HCT116 (cell line): ENCODE measurements at regions of chr19 and their contacts with region 1.

Region 1: GRCh38 chr19:5577785-5578493 is 10.2 kb upstream of the TINCR start:
- DNase-seq: no peak
- ATAC-seq: peak; percentile 91
- H3K4me3 ChIP-seq: no peak overlapping the region
- H3K27ac ChIP-seq: no peak overlapping the region
- H3K4me1 ChIP-seq: peaks cover under 1 to 9% of the 10 kb centered on the region in 2 experiments; a peak in 3 of 4 replicates
- H3K27me3 ChIP-seq: no peaks in the 10 kb centered on the region
- CTCF ChIP-seq: peak; percentile 74 to 97 (median 92)
- POLR2A ChIP-seq: no peak
- RAD21 ChIP-seq: peak; percentile 90

Region 2: GRCh38 chr19:5048091-5048726 is 529.7 kb before region 1 on chr19:
- CTCF ChIA-PET with region 1: no interaction called
- POLR2A ChIA-PET with region 1: no interaction called
- RAD21 ChIA-PET with region 1: no interaction called
- intact Hi-C with region 1: loop called (anchors 5 kb)
- DNase-seq: no peak
- ATAC-seq: peak; percentile 94
- H3K4me3 ChIP-seq: no peak overlapping the region
- H3K27ac ChIP-seq: no peak overlapping the region; the same call in 1 of the 2 replicates
- H3K4me1 ChIP-seq: peaks cover 19 to 35% of the 10 kb centered on the region in 2 experiments
- H3K27me3 ChIP-seq: no peaks in the 10 kb centered on the region
- CTCF ChIP-seq: peak; percentile 63 to 95 (median 91); a peak in 5 of 6 replicates
- POLR2A ChIP-seq: no peak
- RAD21 ChIP-seq: peak; percentile 93

Region 3: GRCh38 chr19:5369962-5370367 is 208.0 kb before region 1 on chr19:
- CTCF ChIA-PET with region 1: no interaction called
- POLR2A ChIA-PET with region 1: no interaction called
- RAD21 ChIA-PET with region 1: no interaction called
- intact Hi-C with region 1: loop called (anchors 1 kb)
- DNase-seq: no peak
- ATAC-seq: peak; percentile 99
- H3K4me3 ChIP-seq: no peak overlapping the region
- H3K27ac ChIP-seq: no peak overlapping the region
- H3K4me1 ChIP-seq: no peaks in the 10 kb centered on the region
- H3K27me3 ChIP-seq: peaks cover 4% of the 10 kb centered on the region; the same call in 1 of the 2 replicates
- CTCF ChIP-seq: peak; percentile 52 to 92 (median 82); a peak in 5 of 6 replicates
- POLR2A ChIP-seq: no peak
- RAD21 ChIP-seq: peak; percentile 50

Region 4: GRCh38 chr19:5417495-5418436 is 160.2 kb before region 1 on chr19:
- CTCF ChIA-PET with region 1: no interaction called
- POLR2A ChIA-PET with region 1: no interaction called
- RAD21 ChIA-PET with region 1: no interaction called
- intact Hi-C with region 1: no loop called
- DNase-seq: no peak
- ATAC-seq: no peak
- H3K4me3 ChIP-seq: no peak overlapping the region
- H3K27ac ChIP-seq: no peak overlapping the region
- H3K4me1 ChIP-seq: no peaks in the 10 kb centered on the region
- H3K27me3 ChIP-seq: peaks cover 21% of the 10 kb centered on the region
- CTCF ChIP-seq: no peak
- POLR2A ChIP-seq: no peak
- RAD21 ChIP-seq: no peak

Region 5: GRCh38 chr19:5547881-5548280 is 30.1 kb before region 1 on chr19:
- CTCF ChIA-PET with region 1: interaction called, 6 read pairs
- POLR2A ChIA-PET with region 1: no interaction called
- RAD21 ChIA-PET with region 1: no interaction called
- intact Hi-C with region 1: loop called (anchors 1 kb)
- DNase-seq: no peak
- ATAC-seq: peak; percentile 78
- H3K4me3 ChIP-seq: no peak overlapping the region
- H3K27ac ChIP-seq: no peak overlapping the region
- H3K4me1 ChIP-seq: peaks cover 0 to 7% of the 10 kb centered on the region in 2 experiments; a peak in 1 of 4 replicates
- H3K27me3 ChIP-seq: no peaks in the 10 kb centered on the region
- CTCF ChIP-seq: peak; percentile 78 to 79 (median 78)
- POLR2A ChIP-seq: no peak
- RAD21 ChIP-seq: peak; percentile 89